Activated CD8-positive, alpha-beta T cell treated with anti-CD3 and anti-CD28 coated beads for 36 hours (primary cell): ENCODE measurements at regions of chr6 and their contacts with region 1.

Region 1: GRCh38 chr6:127811900-127812570 is 88.8 kb downstream of the THEMIS start:
- DNase-seq: peak; percentile 49
- ATAC-seq: peak; percentile 19
- H3K4me3 Mint-ChIP-seq: peak overlapping the region; percentile 65
- H3K27ac Mint-ChIP-seq: peak overlapping the region; percentile 73
- H3K4me1 Mint-ChIP-seq: peaks cover 89% of the 10 kb centered on the region
- H3K27me3 Mint-ChIP-seq: no peaks in the 10 kb centered on the region
- CTCF ChIP-seq: no peak

Region 2: DNA sequence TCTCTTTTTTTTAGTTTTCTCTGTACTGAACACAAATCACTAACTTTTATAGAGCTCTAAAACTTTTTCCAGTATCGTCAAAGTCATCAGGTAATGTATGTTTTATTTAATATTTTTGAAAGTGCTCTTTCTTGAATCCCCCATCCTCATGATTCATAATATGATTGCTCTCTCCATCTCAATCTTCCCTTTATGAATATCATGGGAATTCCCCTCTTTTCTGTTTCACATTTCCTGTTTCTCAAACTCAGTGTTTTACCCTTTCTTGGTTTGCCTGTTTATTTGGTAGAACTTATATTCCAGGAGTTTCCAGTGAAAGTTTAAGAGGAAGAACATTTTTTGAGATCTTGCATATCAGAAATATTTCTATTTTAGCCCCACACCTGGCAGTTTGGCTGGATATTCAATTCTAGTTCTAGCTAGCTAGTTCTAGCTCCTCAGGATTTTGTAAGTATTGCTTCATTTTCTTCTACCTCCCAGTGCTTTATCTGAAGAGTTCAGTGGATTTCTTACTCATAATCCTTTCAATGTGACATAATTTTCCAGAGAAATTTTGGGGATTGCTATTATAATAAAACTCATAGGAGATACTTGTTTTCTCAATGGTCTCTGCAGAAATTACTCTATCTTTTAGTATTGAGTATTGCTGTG is 241.2 kb before region 1 on chr6:
- CTCF ChIA-PET with region 1: no interaction called
- POLR2A ChIA-PET with region 1: no interaction called
- intact Hi-C with region 1: no loop called
- DNase-seq: no peak
- ATAC-seq: peak; percentile 55
- H3K4me3 Mint-ChIP-seq: no peak overlapping the region
- H3K27ac Mint-ChIP-seq: peak overlapping the region; percentile 1
- H3K4me1 Mint-ChIP-seq: peaks cover 11% of the 10 kb centered on the region
- H3K27me3 Mint-ChIP-seq: peaks cover 5% of the 10 kb centered on the region
- CTCF ChIP-seq: no peak

Region 3: GRCh38 chr6:127737009-127737486 is 75.0 kb before region 1 on chr6:
- CTCF ChIA-PET with region 1: interaction called, 5 read pairs
- POLR2A ChIA-PET with region 1: interaction called, 3 read pairs
- intact Hi-C with region 1: loop called (anchors 5 kb)
- DNase-seq: peak; percentile 50
- ATAC-seq: peak; percentile 88
- H3K4me3 Mint-ChIP-seq: no peak overlapping the region
- H3K27ac Mint-ChIP-seq: peak overlapping the region; percentile 41
- H3K4me1 Mint-ChIP-seq: peaks cover 64% of the 10 kb centered on the region
- H3K27me3 Mint-ChIP-seq: no peaks in the 10 kb centered on the region
- CTCF ChIP-seq: peak; percentile 72

Region 4: DNA sequence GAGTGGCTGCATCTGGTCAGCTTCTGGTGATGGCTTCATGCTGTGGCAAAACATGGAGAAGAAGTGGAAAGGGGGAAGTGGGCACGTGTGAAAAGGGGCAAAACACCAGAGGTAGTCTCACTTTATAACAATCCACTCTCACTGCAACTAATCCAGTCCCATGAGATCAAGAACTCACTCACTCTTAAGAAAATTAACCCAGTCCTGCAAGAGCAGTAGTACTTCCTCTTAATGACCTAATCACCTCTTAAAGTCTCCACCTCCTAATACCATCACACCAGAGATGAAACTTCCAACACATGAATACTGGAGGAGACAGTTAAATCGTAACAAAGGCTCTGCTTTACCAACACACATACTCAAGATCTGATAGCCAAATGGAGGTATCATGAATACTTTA is 63.7 kb before region 1 on chr6:
- CTCF ChIA-PET with region 1: no interaction called
- POLR2A ChIA-PET with region 1: no interaction called
- intact Hi-C with region 1: loop called (anchors 5 kb)
- DNase-seq: no peak
- ATAC-seq: peak; percentile 71
- H3K4me3 Mint-ChIP-seq: peak overlapping the region; percentile 7
- H3K27ac Mint-ChIP-seq: peak overlapping the region; percentile 70
- H3K4me1 Mint-ChIP-seq: peaks cover 70% of the 10 kb centered on the region
- H3K27me3 Mint-ChIP-seq: no peaks in the 10 kb centered on the region
- CTCF ChIP-seq: no peak

Region 5: GRCh38 chr6:127786109-127786508 is 25.9 kb before region 1 on chr6:
- CTCF ChIA-PET with region 1: interaction called, 4 read pairs
- POLR2A ChIA-PET with region 1: no interaction called
- intact Hi-C with region 1: loop called (anchors 5 kb)
- DNase-seq: no peak
- ATAC-seq: no peak
- H3K4me3 Mint-ChIP-seq: no peak overlapping the region
- H3K27ac Mint-ChIP-seq: no peak overlapping the region
- H3K4me1 Mint-ChIP-seq: peaks cover 83% of the 10 kb centered on the region
- H3K27me3 Mint-ChIP-seq: no peaks in the 10 kb centered on the region
- CTCF ChIP-seq: no peak

Region 6: DNA sequence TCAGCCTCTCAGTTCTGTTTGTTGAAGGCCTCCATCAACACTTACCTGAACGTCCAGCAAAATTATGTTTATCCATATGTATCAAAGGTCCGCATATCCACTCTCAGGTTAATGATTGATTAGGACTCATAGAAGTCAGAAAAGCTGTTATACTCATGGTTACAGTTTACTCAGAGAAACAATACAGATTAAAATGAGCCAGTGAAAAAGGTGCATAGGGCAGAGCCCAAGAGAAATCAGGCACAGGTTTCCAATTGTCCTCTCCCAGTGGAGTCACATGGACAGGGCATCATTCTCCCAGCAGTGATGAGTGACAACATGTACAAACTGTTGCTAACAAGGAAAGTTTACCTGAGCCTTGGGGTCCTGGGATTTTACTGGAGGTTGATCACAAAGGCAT is 52.7 kb after region 1 on chr6:
- CTCF ChIA-PET with region 1: no interaction called
- POLR2A ChIA-PET with region 1: no interaction called
- intact Hi-C with region 1: no loop called
- DNase-seq: no peak
- ATAC-seq: no peak
- H3K4me3 Mint-ChIP-seq: no peak overlapping the region
- H3K27ac Mint-ChIP-seq: peak overlapping the region; percentile 52
- H3K4me1 Mint-ChIP-seq: peaks cover 65% of the 10 kb centered on the region
- H3K27me3 Mint-ChIP-seq: no peaks in the 10 kb centered on the region
- CTCF ChIP-seq: no peak

Region 7: GRCh38 chr6:127879685-127880084 is 67.7 kb after region 1 on chr6:
- CTCF ChIA-PET with region 1: no interaction called
- POLR2A ChIA-PET with region 1: interaction called, 4 read pairs
- intact Hi-C with region 1: loop called (anchors 10 kb)
- DNase-seq: peak; percentile 83
- ATAC-seq: peak; percentile 76
- H3K4me3 Mint-ChIP-seq: peak overlapping the region; percentile 77
- H3K27ac Mint-ChIP-seq: peak overlapping the region; percentile 92
- H3K4me1 Mint-ChIP-seq: peaks cover 83% of the 10 kb centered on the region
- H3K27me3 Mint-ChIP-seq: no peaks in the 10 kb centered on the region
- CTCF ChIP-seq: no peak

Region 8: GRCh38 chr6:127900935-127901334 is 88.9 kb after region 1 on chr6 and contains the start of gene THEMIS:
- CTCF ChIA-PET with region 1: no interaction called
- POLR2A ChIA-PET with region 1: interaction called, 3 read pairs
- intact Hi-C with region 1: loop called (anchors 5 kb)
- DNase-seq: peak; percentile 78
- ATAC-seq: peak; percentile 72
- H3K4me3 Mint-ChIP-seq: peak within 1 kb of the TSS; percentile 99
- H3K27ac Mint-ChIP-seq: peak within 1 kb of the TSS; percentile 100
- H3K4me1 Mint-ChIP-seq: peaks cover 44% of the 10 kb centered on the region
- H3K27me3 Mint-ChIP-seq: no peaks in the 10 kb centered on the region
- CTCF ChIP-seq: no peak
- total RNA-seq, gene THEMIS: 79.5 to 80.1 TPM